Endothelial cell of umbilical vein (primary cell): ENCODE measurements at regions of chr7 and their contacts with region 1.

Region 1: GRCh38 chr7:55255496-55256435 is 109.4 kb upstream of the LANCL2 start:
- DNase-seq: peak; percentile 76
- H3K4me3 ChIP-seq: peak overlapping the region; percentile 23 to 75 (median 39)
- H3K27ac ChIP-seq: no peak overlapping the region
- H3K4me1 ChIP-seq: peaks cover 9% of the 10 kb centered on the region
- H3K27me3 ChIP-seq: peaks cover 44 to 53% of the 10 kb centered on the region in 2 experiments
- CTCF ChIP-seq: peak; percentile 92 to 97
- POLR2A ChIP-seq: no peak

Region 2: DNA sequence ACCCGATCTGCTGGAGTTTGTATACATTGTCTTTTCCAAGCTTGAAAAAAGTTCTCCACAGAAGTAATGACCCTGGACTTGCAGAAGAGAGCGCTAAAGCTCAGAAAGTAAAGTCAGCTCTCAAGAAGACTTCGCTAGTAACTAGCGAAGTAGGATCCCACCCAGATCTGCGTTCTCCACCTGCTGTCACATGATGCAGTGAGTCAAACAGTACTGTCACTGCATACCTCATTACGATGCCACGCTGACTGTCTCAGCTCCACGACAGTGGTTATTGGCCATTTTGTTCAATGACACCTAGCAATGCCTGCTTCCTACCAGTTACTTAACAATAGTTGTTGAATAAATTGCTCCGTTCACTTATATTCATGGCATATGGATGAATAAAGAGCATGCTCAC is 467.1 kb before region 1 on chr7:
- CTCF ChIA-PET with region 1: interaction called, 406 read pairs
- POLR2A ChIA-PET with region 1: no interaction called
- dilution Hi-C with region 1: no loop called
- intact Hi-C with region 1: loop called (anchors 1 kb)
- DNase-seq: peak; percentile 78
- H3K4me3 ChIP-seq: no peak overlapping the region
- H3K27ac ChIP-seq: no peak overlapping the region
- H3K4me1 ChIP-seq: no peaks in the 10 kb centered on the region
- H3K27me3 ChIP-seq: peaks cover 9 to 23% of the 10 kb centered on the region in 2 experiments
- CTCF ChIP-seq: peak; percentile 58 to 64
- POLR2A ChIP-seq: no peak

Region 3: DNA sequence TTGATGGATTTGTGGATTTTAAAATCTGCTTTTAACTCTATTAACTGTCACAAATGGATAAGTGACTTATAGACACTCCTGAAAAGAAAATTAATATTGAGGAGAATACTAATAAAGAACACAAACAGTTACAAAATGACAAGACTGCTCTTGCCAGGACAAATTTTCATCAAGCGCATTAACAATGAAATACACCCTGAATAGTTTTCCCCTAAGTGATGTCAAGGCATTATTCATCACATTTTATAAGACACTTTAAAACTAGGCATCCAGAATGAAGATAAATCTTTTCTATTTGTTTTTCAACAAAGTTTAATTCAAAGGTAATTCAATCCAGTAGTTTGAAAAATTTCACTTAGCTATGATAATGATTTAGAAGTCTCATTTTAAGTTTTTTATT is 386.3 kb before region 1 on chr7:
- CTCF ChIA-PET with region 1: interaction called, 11 read pairs
- POLR2A ChIA-PET with region 1: no interaction called
- dilution Hi-C with region 1: no loop called
- intact Hi-C with region 1: no loop called
- DNase-seq: no peak
- H3K4me3 ChIP-seq: no peak overlapping the region
- H3K27ac ChIP-seq: no peak overlapping the region
- H3K4me1 ChIP-seq: no peaks in the 10 kb centered on the region
- H3K27me3 ChIP-seq: peaks cover 0 to 3% of the 10 kb centered on the region in 2 experiments
- CTCF ChIP-seq: no peak
- POLR2A ChIP-seq: no peak

Region 4: GRCh38 chr7:55005241-55005851 is 250.4 kb before region 1 on chr7:
- CTCF ChIA-PET with region 1: interaction called, 12 read pairs
- POLR2A ChIA-PET with region 1: no interaction called
- dilution Hi-C with region 1: no loop called
- intact Hi-C with region 1: no loop called
- DNase-seq: no peak
- H3K4me3 ChIP-seq: no peak overlapping the region
- H3K27ac ChIP-seq: no peak overlapping the region
- H3K4me1 ChIP-seq: no peaks in the 10 kb centered on the region
- H3K27me3 ChIP-seq: peaks cover 18 to 40% of the 10 kb centered on the region in 2 experiments
- CTCF ChIP-seq: no peak
- POLR2A ChIP-seq: no peak

Region 5: GRCh38 chr7:55127622-55128081 is 128.1 kb before region 1 on chr7:
- CTCF ChIA-PET with region 1: interaction called, 26 read pairs
- POLR2A ChIA-PET with region 1: no interaction called
- dilution Hi-C with region 1: no loop called
- intact Hi-C with region 1: loop called (anchors 1 kb)
- DNase-seq: peak; percentile 97
- H3K4me3 ChIP-seq: no peak overlapping the region
- H3K27ac ChIP-seq: no peak overlapping the region
- H3K4me1 ChIP-seq: peaks cover 35% of the 10 kb centered on the region
- H3K27me3 ChIP-seq: peaks cover 6 to 7% of the 10 kb centered on the region in 2 experiments
- CTCF ChIP-seq: no peak
- POLR2A ChIP-seq: no peak

Region 6: DNA sequence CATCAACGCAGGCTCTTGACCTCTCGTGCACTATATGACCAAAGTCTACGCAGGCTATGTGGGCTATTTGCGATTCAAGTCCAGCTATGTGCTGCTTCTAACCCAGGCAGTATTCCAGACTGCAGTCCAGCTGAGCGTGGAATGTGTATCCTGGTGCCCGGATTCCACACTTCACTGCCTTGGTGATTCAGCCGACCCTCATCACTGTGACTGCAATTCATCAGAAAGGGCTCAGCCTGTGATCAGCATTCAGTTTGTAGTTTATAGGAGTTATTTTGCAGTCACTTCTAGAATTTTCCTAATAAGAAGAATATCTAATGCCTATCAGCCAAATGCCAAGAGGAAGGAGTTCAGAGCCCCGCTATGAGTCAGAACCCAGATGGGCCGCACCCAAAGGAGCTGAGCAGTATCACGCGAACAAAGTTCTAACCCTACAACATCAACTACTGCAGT is 10.5 kb before region 1 on chr7:
- CTCF ChIA-PET with region 1: interaction called, 11 read pairs
- POLR2A ChIA-PET with region 1: no interaction called
- dilution Hi-C with region 1: no loop called
- intact Hi-C with region 1: no loop called
- DNase-seq: no peak
- H3K4me3 ChIP-seq: no peak overlapping the region
- H3K27ac ChIP-seq: no peak overlapping the region
- H3K4me1 ChIP-seq: no peaks in the 10 kb centered on the region
- H3K27me3 ChIP-seq: peaks cover 0 to 6% of the 10 kb centered on the region in 2 experiments
- CTCF ChIP-seq: no peak
- POLR2A ChIP-seq: no peak

Region 7: GRCh38 chr7:55409482-55410225 is 153.9 kb after region 1 on chr7:
- CTCF ChIA-PET with region 1: no interaction called
- POLR2A ChIA-PET with region 1: no interaction called
- dilution Hi-C with region 1: no loop called
- intact Hi-C with region 1: no loop called
- DNase-seq: no peak
- H3K4me3 ChIP-seq: no peak overlapping the region
- H3K27ac ChIP-seq: no peak overlapping the region
- H3K4me1 ChIP-seq: no peaks in the 10 kb centered on the region
- H3K27me3 ChIP-seq: no peaks in the 10 kb centered on the region
- CTCF ChIP-seq: no peak
- POLR2A ChIP-seq: no peak